ENCODE measurements at regions of chr15 and their contacts with region 1.

Region 1: DNA sequence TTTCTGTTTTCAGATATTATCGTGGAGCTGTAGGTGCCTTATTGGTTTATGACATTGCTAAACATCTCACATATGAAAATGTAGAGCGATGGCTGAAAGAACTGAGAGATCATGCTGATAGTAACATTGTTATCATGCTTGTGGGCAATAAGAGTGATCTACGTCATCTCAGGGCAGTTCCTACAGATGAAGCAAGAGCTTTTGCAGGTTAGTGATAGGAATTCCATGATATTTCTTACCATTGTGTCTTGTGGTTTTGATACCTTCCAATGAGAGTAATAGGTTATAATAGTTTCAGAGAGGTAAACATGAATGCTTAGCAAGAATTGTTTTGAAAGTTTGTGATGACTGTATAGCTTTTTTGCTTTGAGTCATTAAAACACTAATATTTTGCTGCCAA is 8.5 kb downstream of the RAB11A start:
- DNase-seq: no peak
- H3K4me3 ChIP-seq: no peak overlapping the region
- H3K27ac ChIP-seq: no peak overlapping the region
- H3K4me1 ChIP-seq: peaks cover 45% of the 10 kb centered on the region
- H3K27me3 ChIP-seq: no peaks in the 10 kb centered on the region
- CTCF ChIP-seq: no peak
- POLR2A ChIP-seq: no peak

Region 2: GRCh38 chr15:65789759-65790425 is 87.9 kb before region 1 on chr15:
- intact Hi-C with region 1: loop called (anchors 5 kb)
- DNase-seq: no peak
- H3K4me3 ChIP-seq: peak overlapping the region in 1 of 2 donors; percentile 95
- H3K27ac ChIP-seq: peak overlapping the region; percentile 98
- H3K4me1 ChIP-seq: peaks cover 28% of the 10 kb centered on the region
- H3K27me3 ChIP-seq: no peaks in the 10 kb centered on the region
- CTCF ChIP-seq: no peak
- POLR2A ChIP-seq: no peak

Measured in vagina (tissue), 2 donors.